ENCODE measurements at regions of chr15 and their contacts with region 1.

Region 1: GRCh38 chr15:66830816-66831215 is 128.8 kb downstream of the SMAD6 start:
- DNase-seq: no peak
- ATAC-seq: no peak
- H3K4me3 ChIP-seq: no peak overlapping the region
- H3K27ac ChIP-seq: peak overlapping the region; percentile 64
- H3K4me1 ChIP-seq: peaks cover 9% of the 10 kb centered on the region
- H3K27me3 ChIP-seq: no peaks in the 10 kb centered on the region
- CTCF ChIP-seq: no peak

Region 2: DNA sequence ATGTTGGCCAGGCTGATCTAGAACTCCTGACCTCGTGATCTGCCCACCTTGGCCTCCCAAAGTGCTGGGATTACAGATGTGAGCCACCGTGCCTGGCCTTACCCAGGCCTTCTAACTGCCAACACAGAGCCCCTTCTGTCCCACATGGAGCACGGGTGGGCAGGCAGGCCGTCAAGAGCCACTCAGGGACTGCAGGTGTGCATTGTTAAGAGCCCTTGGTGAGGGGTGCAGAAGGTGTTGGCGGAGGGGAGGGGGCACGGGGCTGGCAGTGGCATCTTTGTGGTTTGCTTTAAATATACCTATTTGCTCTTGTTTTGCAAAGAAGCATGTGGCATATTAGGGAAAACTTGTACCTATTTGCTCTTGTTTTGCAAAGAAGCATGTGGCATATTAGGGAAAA is 91.5 kb before region 1 on chr15:
- CTCF ChIA-PET with region 1: no interaction called
- POLR2A ChIA-PET with region 1: interaction called, 10 read pairs
- in situ Hi-C with region 1: no loop called
- intact Hi-C with region 1: no loop called
- DNase-seq: no peak
- ATAC-seq: no peak
- H3K4me3 ChIP-seq: no peak overlapping the region
- H3K27ac ChIP-seq: peak overlapping the region; percentile 91
- H3K4me1 ChIP-seq: peaks cover 78% of the 10 kb centered on the region
- H3K27me3 ChIP-seq: no peaks in the 10 kb centered on the region
- CTCF ChIP-seq: no peak